ENCODE measurements at regions of chr9 and their contacts with region 1.

Region 1: GRCh38 chr9:129460323-129461261 is 160.3 kb downstream of the C9orf50 start:
- DNase-seq: peak; percentile 59 to 94 (median 75)
- ATAC-seq: peak; percentile 75 to 77
- H3K4me3 Mint-ChIP-seq: peak overlapping the region; percentile 68 to 92 (median 81)
- H3K27ac Mint-ChIP-seq: peak overlapping the region; percentile 29 to 93 (median 90)
- H3K4me1 Mint-ChIP-seq: peaks cover 17 to 50% (median 36%) of the 10 kb centered on the region in 4 donors
- H3K27me3 Mint-ChIP-seq: no peaks in the 10 kb centered on the region

Region 2: GRCh38 chr9:129413537-129414376 is 46.8 kb before region 1 on chr9:
- POLR2A ChIA-PET with region 1: interaction called, 30 read pairs
- DNase-seq: peak; percentile 96 to 100 (median 98)
- ATAC-seq: peak; percentile 77 to 82
- H3K4me3 Mint-ChIP-seq: peak overlapping the region; percentile 78 to 94 (median 86)
- H3K27ac Mint-ChIP-seq: peak overlapping the region; percentile 96 to 99 (median 99)
- H3K4me1 Mint-ChIP-seq: peaks cover 15 to 54% (median 41%) of the 10 kb centered on the region in 4 donors
- H3K27me3 Mint-ChIP-seq: peaks cover 0 to 3% (median 0%) of the 10 kb centered on the region in 5 donors

Region 3: GRCh38 chr9:129436751-129437625 is 23.6 kb before region 1 on chr9:
- POLR2A ChIA-PET with region 1: interaction called, 26 read pairs
- DNase-seq: peak in 9 of 10 donors; percentile 19 to 69 (median 35)
- ATAC-seq: peak; percentile 78 to 83
- H3K4me3 Mint-ChIP-seq: peak overlapping the region; percentile 74 to 96 (median 89)
- H3K27ac Mint-ChIP-seq: peak overlapping the region; percentile 18 to 87 (median 72)
- H3K4me1 Mint-ChIP-seq: peaks cover 12 to 36% (median 32%) of the 10 kb centered on the region in 4 donors
- H3K27me3 Mint-ChIP-seq: peaks cover 8 to 47% (median 34%) of the 10 kb centered on the region in 5 donors

Region 4: GRCh38 chr9:129474740-129475404 is 14.3 kb after region 1 on chr9:
- POLR2A ChIA-PET with region 1: interaction called, 10 read pairs
- DNase-seq: no peak
- ATAC-seq: no peak
- H3K4me3 Mint-ChIP-seq: no peak overlapping the region
- H3K27ac Mint-ChIP-seq: no peak overlapping the region
- H3K4me1 Mint-ChIP-seq: peaks cover 1 to 6% (median 5%) of the 10 kb centered on the region in 4 donors
- H3K27me3 Mint-ChIP-seq: peaks cover 0 to 14% (median 3%) of the 10 kb centered on the region in 5 donors

Region 5: GRCh38 chr9:129482521-129483414 is 22.2 kb after region 1 on chr9:
- POLR2A ChIA-PET with region 1: interaction called, 23 read pairs
- DNase-seq: peak in 4 of 10 donors; percentile 23 to 33 (median 27)
- ATAC-seq: peak; percentile 21 to 50
- H3K4me3 Mint-ChIP-seq: peak overlapping the region; percentile 45 to 78 (median 68)
- H3K27ac Mint-ChIP-seq: peak overlapping the region in 4 of 10 donors; percentile 52 to 89 (median 70)
- H3K4me1 Mint-ChIP-seq: peaks cover 19 to 44% (median 33%) of the 10 kb centered on the region in 4 donors
- H3K27me3 Mint-ChIP-seq: peaks cover 0 to 22% (median 3%) of the 10 kb centered on the region in 5 donors